HEK293T (cell line): ENCODE measurements at regions of chr1 and their contacts with region 1.

Region 1: GRCh38 chr1:45673956-45674355 is 12.4 kb downstream of the GPBP1L1 start:
- DNase-seq: no peak

Region 2: DNA sequence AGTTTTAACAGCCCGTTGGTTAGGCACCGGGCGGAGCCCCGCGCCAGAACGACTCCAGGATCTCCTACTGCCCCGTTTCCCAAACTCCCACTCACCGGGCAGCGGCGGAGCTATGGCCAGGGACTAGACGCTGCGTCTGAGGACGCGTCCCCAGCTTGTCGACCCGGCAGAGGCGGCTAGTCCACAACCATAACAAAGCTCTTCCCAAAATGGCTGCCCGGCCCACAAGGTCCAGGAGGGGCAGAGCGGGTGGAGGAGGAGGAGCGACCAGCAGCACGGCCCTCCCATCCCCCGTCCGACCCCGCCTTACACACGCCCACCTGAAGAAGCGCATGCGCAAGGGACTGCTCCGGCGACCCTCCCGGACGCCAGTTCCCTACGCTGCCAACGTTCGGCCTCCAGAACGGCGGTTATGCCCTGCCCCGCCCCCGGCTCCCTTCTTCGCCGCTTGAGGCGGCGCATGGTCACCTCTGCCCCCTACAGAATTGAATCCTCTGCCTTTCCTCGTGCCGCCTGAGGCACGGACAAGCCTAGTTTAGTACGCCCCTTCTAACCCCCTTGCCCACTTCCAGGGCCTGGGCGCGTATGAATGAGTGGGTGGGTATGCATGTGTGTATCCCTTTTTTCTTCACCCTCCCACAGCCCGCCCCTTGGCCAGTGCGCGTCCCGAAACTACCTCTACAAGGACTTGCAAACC is 12.5 kb after region 1 on chr1 and contains the start of gene GPBP1L1:
- CTCF ChIA-PET with region 1: interaction called, 3 read pairs
- POLR2A ChIA-PET with region 1: interaction called, 13 read pairs
- DNase-seq: peak; percentile 98